ENCODE measurements at regions of chr12 and their contacts with region 1.

Region 1: DNA sequence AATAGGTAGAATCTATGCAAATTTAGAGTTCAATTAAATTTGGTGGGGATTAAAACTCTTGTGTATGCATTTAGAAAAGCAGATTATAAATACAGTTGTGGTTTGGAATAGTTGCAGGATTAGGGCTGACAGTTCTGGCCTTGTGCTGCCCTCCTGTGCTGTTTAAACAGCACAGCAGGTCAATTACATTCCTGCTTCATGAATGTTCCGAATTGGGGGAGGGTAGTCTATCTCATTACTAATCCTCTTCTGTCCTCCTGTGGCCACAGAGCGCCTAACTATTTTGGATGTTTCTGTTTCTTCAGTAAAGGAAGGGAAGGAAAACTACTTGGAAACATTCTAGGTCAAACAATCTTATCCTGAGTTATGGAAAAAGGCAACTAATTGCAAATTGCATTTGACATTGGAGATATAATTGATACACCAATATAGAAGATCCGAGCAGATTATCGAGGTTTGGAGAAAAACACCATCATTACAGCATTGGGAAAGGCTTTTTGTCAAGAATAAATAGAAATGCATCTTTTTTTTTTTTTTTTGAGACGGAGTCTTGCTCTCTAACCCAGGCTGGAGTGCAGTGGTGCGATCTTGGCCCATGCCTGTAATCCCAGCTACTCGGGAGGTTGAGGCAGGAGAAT is 8.7 kb upstream of the GPR19 start:
- DNase-seq: peak in 4 of 5 donors; percentile 37 to 63 (median 56)
- ATAC-seq: peak; percentile 94 to 99 (median 99)
- H3K4me3 ChIP-seq: no peak overlapping the region
- H3K27ac ChIP-seq: no peak overlapping the region
- H3K4me1 ChIP-seq: peaks cover 0 to 20% (median under 1%) of the 10 kb centered on the region in 12 donors
- H3K27me3 ChIP-seq: no peaks in the 10 kb centered on the region
- CTCF ChIP-seq: peak; percentile 62 to 94 (median 84)
- POLR2A ChIP-seq: no peak

Region 2: DNA sequence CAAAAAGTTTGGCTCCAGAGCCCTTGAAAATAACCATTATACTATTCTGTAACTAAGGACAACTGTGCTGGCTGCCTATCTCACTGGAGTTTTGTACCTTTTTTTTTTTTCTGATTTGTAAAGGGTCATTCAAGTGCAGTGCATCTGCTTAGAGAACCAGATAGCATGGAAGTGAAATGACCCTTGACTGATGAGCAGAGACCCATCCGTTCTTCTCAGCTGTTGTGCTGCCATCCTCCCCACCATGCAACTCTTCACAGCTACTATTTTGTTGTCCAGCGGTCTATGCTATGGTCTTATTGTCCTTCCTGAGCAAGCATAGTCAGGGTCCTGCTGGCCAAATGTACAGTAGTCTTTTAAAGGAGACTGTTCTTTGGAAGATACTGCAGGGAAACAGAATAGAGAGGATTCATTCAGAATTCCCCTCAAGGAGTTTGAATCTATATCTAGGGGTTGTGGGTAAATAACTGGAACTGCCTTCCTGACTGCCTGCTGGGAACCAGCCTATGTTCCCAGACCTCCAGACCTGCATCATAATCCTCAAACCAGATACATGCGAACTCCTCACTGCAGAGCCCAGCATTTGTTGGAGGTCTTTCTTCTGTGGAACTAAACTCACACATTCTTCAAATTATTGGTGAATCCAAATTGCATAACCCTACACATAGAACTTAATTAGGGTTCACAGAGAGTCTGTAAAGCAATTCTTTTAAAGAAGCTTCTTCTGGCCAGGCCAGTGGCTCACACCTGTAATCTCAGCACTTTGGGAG is 49.8 kb before region 1 on chr12:
- intact Hi-C with region 1: loop called in 1 of 10 experiments (anchors 5 kb)
- DNase-seq: no peak
- ATAC-seq: no peak
- H3K4me3 ChIP-seq: no peak overlapping the region
- H3K27ac ChIP-seq: no peak overlapping the region
- H3K4me1 ChIP-seq: peaks cover 0 to 9% (median 0%) of the 10 kb centered on the region in 12 donors
- H3K27me3 ChIP-seq: no peaks in the 10 kb centered on the region
- CTCF ChIP-seq: no peak
- POLR2A ChIP-seq: no peak

Region 3: DNA sequence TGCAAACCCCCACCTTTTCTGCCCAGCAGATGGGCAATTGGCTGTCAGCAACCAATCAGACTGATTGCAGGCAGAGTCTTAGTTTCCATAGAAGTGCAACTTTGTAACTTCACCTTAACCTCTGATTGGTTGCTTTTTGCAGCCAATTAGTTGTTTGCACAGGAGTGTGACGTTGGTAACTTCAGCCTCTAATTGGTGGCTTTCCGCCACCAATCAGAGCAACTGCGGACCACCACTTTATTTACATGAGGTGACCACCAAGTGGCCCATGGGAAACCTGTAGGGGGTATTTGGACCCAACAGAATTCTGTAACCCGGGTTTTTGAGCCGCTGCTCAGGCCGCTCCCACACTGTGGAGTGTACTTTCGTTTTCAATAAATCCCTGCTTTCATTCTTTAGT is 44.7 kb after region 1 on chr12:
- intact Hi-C with region 1: no loop called
- DNase-seq: no peak
- ATAC-seq: no peak
- H3K4me3 ChIP-seq: peak overlapping the region in 7 of 12 donors; percentile 8 to 47 (median 32)
- H3K27ac ChIP-seq: no peak overlapping the region
- H3K4me1 ChIP-seq: peaks cover 0 to 12% (median 0%) of the 10 kb centered on the region in 12 donors
- H3K27me3 ChIP-seq: no peaks in the 10 kb centered on the region
- CTCF ChIP-seq: no peak
- POLR2A ChIP-seq: no peak

Region 4: GRCh38 chr12:12764824-12765223 is 60.1 kb after region 1 on chr12:
- intact Hi-C with region 1: no loop called
- DNase-seq: no peak
- ATAC-seq: no peak
- H3K4me3 ChIP-seq: no peak overlapping the region
- H3K27ac ChIP-seq: no peak overlapping the region
- H3K4me1 ChIP-seq: no peaks in the 10 kb centered on the region
- H3K27me3 ChIP-seq: no peaks in the 10 kb centered on the region
- CTCF ChIP-seq: no peak
- POLR2A ChIP-seq: no peak

Measured in heart left ventricle (tissue), 16 donors.